ENCODE measurements at regions of chr12 and their contacts with region 1.

Region 1: GRCh38 chr12:127063339-127064072 is 1203.5 kb upstream of the TMEM132C start:
- DNase-seq: no peak
- ATAC-seq: no peak
- H3K4me3 Mint-ChIP-seq: no peak overlapping the region
- H3K27ac Mint-ChIP-seq: no peak overlapping the region
- H3K4me1 Mint-ChIP-seq: no peaks in the 10 kb centered on the region
- H3K27me3 Mint-ChIP-seq: peaks cover 3% of the 10 kb centered on the region

Region 2: DNA sequence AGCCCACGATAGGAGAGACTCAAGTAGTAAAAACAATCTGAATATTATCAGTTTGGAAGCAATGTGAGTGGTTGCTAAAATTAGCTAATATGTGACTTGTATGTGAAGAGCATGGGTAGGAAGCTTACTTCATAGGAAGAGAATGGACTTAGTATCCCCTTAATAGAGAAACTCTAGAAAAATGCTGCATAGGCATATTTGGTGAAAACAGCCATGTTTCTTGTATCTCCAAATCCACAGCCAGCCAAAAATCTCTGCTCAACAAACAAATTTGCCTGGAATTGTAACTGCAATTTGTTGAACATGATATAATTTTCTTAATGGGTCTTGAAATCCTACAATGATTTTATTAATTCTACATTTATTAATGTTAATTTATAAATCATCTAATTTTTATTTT is 49.4 kb before region 1 on chr12:
- CTCF ChIA-PET with region 1: no interaction called
- POLR2A ChIA-PET with region 1: no interaction called
- intact Hi-C with region 1: loop called in 1 of 2 experiments (anchors 2 kb)
- DNase-seq: no peak
- ATAC-seq: no peak
- H3K4me3 Mint-ChIP-seq: no peak overlapping the region
- H3K27ac Mint-ChIP-seq: no peak overlapping the region
- H3K4me1 Mint-ChIP-seq: no peaks in the 10 kb centered on the region
- H3K27me3 Mint-ChIP-seq: peaks cover 10% of the 10 kb centered on the region

Region 3: GRCh38 chr12:127455347-127456265 is 392.1 kb after region 1 on chr12:
- CTCF ChIA-PET with region 1: no interaction called
- POLR2A ChIA-PET with region 1: no interaction called
- intact Hi-C with region 1: no loop called
- DNase-seq: no peak
- ATAC-seq: no peak
- H3K4me3 Mint-ChIP-seq: no peak overlapping the region
- H3K27ac Mint-ChIP-seq: no peak overlapping the region
- H3K4me1 Mint-ChIP-seq: no peaks in the 10 kb centered on the region
- H3K27me3 Mint-ChIP-seq: peaks cover 26% of the 10 kb centered on the region

Measured in activated CD4-positive, alpha-beta T cell treated with anti-CD3 and anti-CD28 coated beads for 36 hours (primary cell).